Naive thymus-derived CD4-positive, alpha-beta T cell (primary cell): ENCODE measurements at regions of chr15 and their contacts with region 1.

Region 1: DNA sequence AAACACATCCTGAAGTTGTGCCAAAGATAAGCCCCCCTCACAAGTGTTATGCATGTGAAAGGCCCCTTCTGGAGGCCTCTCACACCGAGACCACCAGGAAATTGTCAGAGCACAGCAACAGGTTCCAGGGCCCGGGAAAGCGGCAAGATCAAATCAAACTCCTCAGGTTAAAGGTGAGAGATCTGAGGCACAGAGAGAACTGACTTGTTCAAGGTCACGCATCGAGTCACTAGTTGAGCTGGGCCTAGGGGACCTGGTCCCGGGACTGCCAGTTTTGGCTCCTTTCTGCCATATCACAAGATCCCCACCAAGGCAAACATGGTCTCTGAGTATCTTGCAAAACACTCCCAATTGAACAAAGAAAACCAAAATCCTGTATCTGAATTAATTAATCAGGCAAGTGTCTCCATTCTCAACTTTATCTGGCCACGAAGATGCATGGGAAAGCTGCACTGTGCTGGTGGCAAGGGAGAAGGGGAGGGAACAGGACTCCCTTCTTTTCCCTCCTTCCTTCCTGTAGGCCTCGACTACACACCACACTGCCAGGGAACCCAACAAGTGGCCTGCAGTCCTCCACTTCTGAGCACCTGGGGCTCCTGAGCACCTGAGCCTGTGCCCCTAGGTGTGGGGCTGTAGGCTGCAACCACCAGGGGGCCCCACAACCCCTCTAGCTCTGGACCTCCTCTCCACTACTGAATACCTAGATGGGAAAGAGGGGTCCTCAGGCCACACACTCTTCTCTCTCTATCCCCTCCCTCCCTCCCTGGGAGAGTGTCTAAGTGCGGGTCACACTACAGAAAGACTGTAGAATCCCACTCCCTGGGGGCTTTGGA is 37.3 kb downstream of the ANP32A start:
- DNase-seq: peak; percentile 42 to 66 (median 59)
- ATAC-seq: peak; percentile 85
- H3K4me3 ChIP-seq: no peak overlapping the region
- H3K4me3 Mint-ChIP-seq: peak overlapping the region in 4 of 10 donors; percentile 47 to 67 (median 55)
- H3K27ac ChIP-seq: no peak overlapping the region
- H3K27ac Mint-ChIP-seq: peak overlapping the region; percentile 12 to 85 (median 71)
- H3K4me1 ChIP-seq: peaks cover 5 to 17% of the 10 kb centered on the region in 2 donors
- H3K4me1 Mint-ChIP-seq: peaks cover 22 to 51% (median 32%) of the 10 kb centered on the region in 7 donors
- H3K27me3 ChIP-seq: no peaks in the 10 kb centered on the region
- H3K27me3 Mint-ChIP-seq: no peaks in the 10 kb centered on the region

Region 2: GRCh38 chr15:68550481-68551295 is 232.8 kb before region 1 on chr15:
- CTCF ChIA-PET with region 1: no interaction called
- POLR2A ChIA-PET with region 1: no interaction called
- intact Hi-C with region 1: loop called in 1 of 2 experiments (anchors 1 kb)
- DNase-seq: peak; percentile 32 to 77 (median 55)
- ATAC-seq: peak; percentile 65
- H3K4me3 ChIP-seq: no peak overlapping the region
- H3K4me3 Mint-ChIP-seq: no peak overlapping the region
- H3K27ac ChIP-seq: no peak overlapping the region
- H3K27ac Mint-ChIP-seq: no peak overlapping the region
- H3K4me1 ChIP-seq: no peaks in the 10 kb centered on the region
- H3K4me1 Mint-ChIP-seq: peaks cover 0 to 3% (median 0%) of the 10 kb centered on the region in 7 donors
- H3K27me3 ChIP-seq: peaks cover 0 to 3% of the 10 kb centered on the region in 2 donors
- H3K27me3 Mint-ChIP-seq: peaks cover 32 to 49% (median 36%) of the 10 kb centered on the region in 5 donors

Region 3: DNA sequence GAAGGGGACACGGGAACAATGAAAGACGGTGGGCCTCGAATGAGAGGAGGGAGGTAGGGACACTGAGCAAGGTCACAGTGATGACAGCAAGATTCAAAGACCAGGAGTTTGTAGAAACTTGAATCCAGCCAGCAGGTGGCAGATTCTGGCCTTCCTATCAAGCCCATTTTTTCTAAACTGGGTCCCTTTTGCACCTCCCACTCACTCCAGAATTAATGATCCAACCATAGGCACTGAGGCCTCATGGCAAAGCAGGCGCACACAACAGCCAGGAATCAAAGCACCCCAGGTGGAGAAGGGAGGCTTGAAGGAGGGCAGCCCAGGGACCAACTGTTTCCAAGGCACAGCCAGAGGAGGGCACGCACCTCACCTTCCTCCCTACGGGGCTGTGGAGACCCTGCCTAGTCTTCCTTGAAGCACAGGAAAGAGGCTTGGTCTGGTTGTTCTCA is 52.9 kb before region 1 on chr15:
- CTCF ChIA-PET with region 1: no interaction called
- POLR2A ChIA-PET with region 1: no interaction called
- intact Hi-C with region 1: loop called in 1 of 2 experiments (anchors 1 kb)
- DNase-seq: peak in 6 of 9 donors; percentile 8 to 40 (median 18)
- ATAC-seq: no peak
- H3K4me3 ChIP-seq: no peak overlapping the region
- H3K4me3 Mint-ChIP-seq: no peak overlapping the region
- H3K27ac ChIP-seq: no peak overlapping the region
- H3K27ac Mint-ChIP-seq: no peak overlapping the region
- H3K4me1 ChIP-seq: no peaks in the 10 kb centered on the region
- H3K4me1 Mint-ChIP-seq: peaks cover 0 to 7% (median 4%) of the 10 kb centered on the region in 7 donors
- H3K27me3 ChIP-seq: no peaks in the 10 kb centered on the region
- H3K27me3 Mint-ChIP-seq: peaks cover 0 to 18% (median 0%) of the 10 kb centered on the region in 5 donors

Region 4: GRCh38 chr15:68820295-68821189 is 37.1 kb after region 1 on chr15 and contains the start of gene ANP32A:
- CTCF ChIA-PET with region 1: interaction called, 7 read pairs
- POLR2A ChIA-PET with region 1: interaction called, 5 read pairs
- intact Hi-C with region 1: loop called (anchors 1 kb)
- DNase-seq: peak; percentile 90 to 99 (median 95)
- ATAC-seq: peak; percentile 85
- H3K4me3 ChIP-seq: peak within 1 kb of the TSS; percentile 99
- H3K4me3 Mint-ChIP-seq: peak within 1 kb of the TSS; percentile 85 to 100 (median 92)
- H3K27ac ChIP-seq: peak within 1 kb of the TSS; percentile 91
- H3K27ac Mint-ChIP-seq: peak within 1 kb of the TSS; percentile 84 to 100 (median 92)
- H3K4me1 ChIP-seq: peaks cover 19 to 23% of the 10 kb centered on the region in 2 donors
- H3K4me1 Mint-ChIP-seq: peaks cover 22 to 37% (median 34%) of the 10 kb centered on the region in 7 donors
- H3K27me3 ChIP-seq: no peaks in the 10 kb centered on the region
- H3K27me3 Mint-ChIP-seq: no peaks in the 10 kb centered on the region
- total RNA-seq, gene ANP32A: 86.1 to 229 (median 136) TPM

Region 5: GRCh38 chr15:68875377-68876116 is 92.1 kb after region 1 on chr15:
- CTCF ChIA-PET with region 1: interaction called, 51 read pairs
- POLR2A ChIA-PET with region 1: interaction called, 5 read pairs
- intact Hi-C with region 1: loop called (anchors 1 kb)
- DNase-seq: peak; percentile 81 to 92 (median 87)
- ATAC-seq: peak; percentile 83
- H3K4me3 ChIP-seq: no peak overlapping the region
- H3K4me3 Mint-ChIP-seq: peak overlapping the region; percentile 2 to 72 (median 58)
- H3K27ac ChIP-seq: no peak overlapping the region
- H3K27ac Mint-ChIP-seq: no peak overlapping the region
- H3K4me1 ChIP-seq: peaks cover 0 to 4% of the 10 kb centered on the region in 2 donors
- H3K4me1 Mint-ChIP-seq: peaks cover 0 to 7% (median 0%) of the 10 kb centered on the region in 7 donors
- H3K27me3 ChIP-seq: no peaks in the 10 kb centered on the region
- H3K27me3 Mint-ChIP-seq: peaks cover 5 to 53% (median 22%) of the 10 kb centered on the region in 5 donors